PC-9 (cell line): ENCODE measurements at regions of chr2 and their contacts with region 1.

Region 1: DNA sequence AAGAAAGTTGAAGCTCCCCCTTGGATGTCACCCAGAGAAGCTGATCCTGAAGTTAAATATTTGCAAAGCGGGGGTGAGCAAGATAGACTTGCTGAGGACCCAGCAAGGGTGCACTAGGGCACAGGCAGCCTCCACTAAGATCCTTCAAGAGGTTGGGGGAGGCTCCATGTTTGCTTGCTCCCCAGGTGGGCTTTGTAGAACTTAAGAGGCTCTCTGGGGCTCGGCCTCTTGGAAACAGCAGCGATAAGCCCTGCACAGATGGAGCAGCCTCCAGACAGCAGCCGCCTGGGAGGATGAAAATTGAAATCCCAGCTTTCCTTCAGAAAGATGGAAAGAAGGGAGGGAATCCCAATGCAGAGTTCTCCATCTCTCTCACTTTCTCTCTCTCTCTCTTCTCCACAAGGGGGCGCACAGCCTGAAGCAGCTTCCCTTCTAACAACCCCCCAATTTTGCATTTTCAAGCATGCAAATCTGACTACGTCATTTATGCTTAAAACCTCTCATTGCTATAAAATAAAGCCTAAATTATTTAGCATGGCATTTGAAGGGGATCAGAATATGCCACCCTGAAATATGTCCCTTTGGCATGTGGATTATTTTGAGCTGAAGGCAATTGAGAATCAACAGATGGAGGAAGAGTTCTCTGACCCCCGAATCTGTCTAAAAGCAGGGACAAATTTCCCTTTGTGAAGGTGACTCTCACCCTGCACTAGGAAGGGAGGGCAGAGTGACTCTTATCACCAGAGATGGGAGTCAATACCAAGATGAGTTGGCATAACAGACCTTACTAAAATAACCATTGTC is 185.7 kb upstream of the KLHL29 start:
- DNase-seq: no peak
- H3K4me3 ChIP-seq: no peak overlapping the region
- H3K27ac ChIP-seq: no peak overlapping the region
- H3K4me1 ChIP-seq: no peaks in the 10 kb centered on the region
- H3K27me3 ChIP-seq: peaks cover 1% of the 10 kb centered on the region; the same call in 1 of the 2 replicates
- CTCF ChIP-seq: peak; percentile 89

Region 2: GRCh38 chr2:23418461-23418911 is 219.2 kb after region 1 on chr2:
- CTCF ChIA-PET with region 1: no interaction called
- POLR2A ChIA-PET with region 1: no interaction called
- intact Hi-C with region 1: no loop called
- DNase-seq: no peak
- H3K4me3 ChIP-seq: no peak overlapping the region
- H3K27ac ChIP-seq: no peak overlapping the region
- H3K4me1 ChIP-seq: no peaks in the 10 kb centered on the region
- H3K27me3 ChIP-seq: no peaks in the 10 kb centered on the region
- CTCF ChIP-seq: no peak

Region 3: GRCh38 chr2:23760736-23761135 is 561.4 kb after region 1 on chr2:
- CTCF ChIA-PET with region 1: no interaction called
- POLR2A ChIA-PET with region 1: no interaction called
- intact Hi-C with region 1: loop called (anchors 2 kb)
- DNase-seq: no peak
- H3K4me3 ChIP-seq: no peak overlapping the region
- H3K27ac ChIP-seq: no peak overlapping the region
- H3K4me1 ChIP-seq: peaks cover 12% of the 10 kb centered on the region
- H3K27me3 ChIP-seq: no peaks in the 10 kb centered on the region
- CTCF ChIP-seq: peak; percentile 70